Dorsolateral prefrontal cortex (tissue), 120 donors: ENCODE measurements at regions of chr9 and their contacts with region 1.

Region 1: DNA sequence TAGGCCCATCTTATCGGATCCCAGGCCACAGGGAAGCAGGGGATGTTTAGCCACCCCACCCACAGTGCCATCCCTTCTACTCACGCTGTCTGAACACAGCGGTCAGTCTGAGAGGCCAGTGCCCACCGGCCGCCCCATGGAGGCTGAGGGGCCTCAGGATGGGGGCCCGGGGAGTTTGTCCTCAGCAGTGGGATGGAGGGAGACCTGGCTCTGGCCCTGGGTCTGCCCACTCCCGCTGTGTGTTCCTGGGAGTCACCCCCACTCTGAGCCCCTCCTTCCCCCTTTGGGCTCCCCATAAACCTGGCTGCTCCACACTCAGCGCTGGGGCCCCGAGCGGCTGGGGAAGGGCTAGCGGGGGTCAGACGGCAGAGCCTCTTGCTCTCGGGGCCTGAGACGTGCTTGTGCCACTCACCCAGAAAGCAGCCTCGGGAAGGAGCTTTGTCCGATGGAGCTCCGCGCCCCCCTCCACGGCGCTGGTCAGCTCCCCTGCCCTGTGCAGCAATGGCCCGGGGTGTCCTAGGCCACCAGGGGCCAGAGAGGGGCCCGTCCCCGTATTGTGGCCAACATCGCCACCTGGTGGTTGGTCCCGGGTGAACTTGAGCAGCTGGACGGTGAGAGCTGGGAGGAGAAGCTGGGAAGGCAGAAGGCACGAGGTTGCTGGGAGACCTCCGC is 10.9 kb upstream of the LAMC3 start:
- DNase-seq: peak; percentile 18 to 83 (median 76)
- H3K4me3 ChIP-seq: no peak overlapping the region
- H3K27ac ChIP-seq: no peak overlapping the region
- H3K27me3 ChIP-seq: peaks cover 0 to 24% (median 3%) of the 10 kb centered on the region in 45 donors
- CTCF ChIP-seq: peak; percentile 61 to 92 (median 81)

Region 2: DNA sequence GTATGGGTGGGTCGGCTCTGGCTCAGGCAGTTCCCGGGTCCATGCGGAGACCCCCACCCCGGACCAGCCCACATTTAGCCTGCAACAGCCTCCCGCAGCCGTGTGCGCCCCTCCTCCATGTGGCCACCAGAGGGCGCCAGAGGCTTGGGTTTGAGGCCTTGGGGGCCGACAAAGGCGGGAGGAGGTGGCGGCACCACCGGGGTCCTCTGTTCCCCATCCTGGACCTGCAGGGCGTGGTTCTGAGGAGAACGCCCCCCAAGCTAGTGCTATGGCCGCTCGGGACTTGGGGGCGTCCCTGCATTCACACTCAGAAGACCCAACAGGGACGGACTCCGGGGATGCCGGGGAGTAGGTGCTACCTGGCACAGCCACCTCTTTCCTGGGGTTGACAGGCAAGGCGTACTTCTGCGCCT is 536.8 kb before region 1 on chr9:
- intact Hi-C with region 1: loop called in 1 of 2 experiments (anchors 5 kb)
- DNase-seq: peak in 5 of 10 donors; percentile 50 to 78 (median 68)
- H3K4me3 ChIP-seq: peak overlapping the region in 24 of 59 donors; percentile 3 to 49 (median 32)
- H3K27ac ChIP-seq: no peak overlapping the region
- H3K27me3 ChIP-seq: peaks cover 0 to 14% (median 0%) of the 10 kb centered on the region in 45 donors
- CTCF ChIP-seq: peak; percentile 77 to 99 (median 96)

Region 3: DNA sequence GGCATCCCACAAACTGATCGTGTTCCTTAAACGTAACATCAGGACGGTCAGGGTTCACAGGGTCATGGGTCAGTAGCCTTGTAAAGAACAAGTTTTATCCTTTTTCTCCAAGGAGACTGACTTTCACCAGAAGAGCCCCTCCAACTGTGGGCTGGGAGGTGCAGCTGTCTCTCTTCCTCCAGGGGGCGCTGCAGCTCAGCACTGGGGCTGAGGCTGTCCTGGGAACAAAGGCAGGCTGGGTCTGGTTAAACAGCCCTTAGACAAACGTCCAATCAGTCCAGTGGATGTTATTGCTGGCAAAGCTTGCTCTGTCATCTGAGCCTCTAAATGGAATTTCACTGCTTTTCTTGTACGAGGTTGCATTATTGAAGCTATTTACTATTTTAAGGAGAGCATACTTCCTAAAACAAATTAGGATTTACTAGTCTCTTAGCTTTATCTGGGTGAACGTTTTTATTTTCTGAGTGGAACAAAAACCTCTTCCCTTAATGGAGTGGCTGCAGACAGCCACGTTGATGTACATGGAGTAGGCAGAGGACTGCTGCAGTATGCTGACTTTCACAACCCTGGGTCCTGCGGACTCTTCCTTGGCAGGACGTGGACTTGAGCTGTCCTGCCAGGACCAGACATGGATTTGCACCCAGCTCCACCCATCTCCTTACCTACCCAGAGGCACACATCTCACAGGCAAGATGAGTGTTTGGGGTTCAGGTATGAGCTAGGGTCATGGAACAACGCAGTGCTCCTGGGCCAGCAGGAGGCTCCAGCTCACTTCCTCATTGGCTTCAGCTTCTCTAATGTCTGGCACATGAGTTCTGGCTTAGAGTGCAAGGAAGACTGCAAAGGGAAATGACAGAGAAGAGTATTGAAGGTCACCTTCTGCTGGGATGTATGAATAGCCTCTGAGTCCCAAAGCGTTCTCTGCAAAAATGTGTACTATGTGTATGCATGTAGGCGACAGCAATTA is 296.7 kb before region 1 on chr9:
- intact Hi-C with region 1: loop called in 1 of 2 experiments (anchors 5 kb)
- DNase-seq: peak; percentile 51 to 80 (median 73)
- H3K4me3 ChIP-seq: peak overlapping the region in 2 of 59 donors; percentile 2 to 7
- H3K27ac ChIP-seq: peak overlapping the region in 51 of 59 donors; percentile 5 to 80 (median 63)
- H3K27me3 ChIP-seq: no peaks in the 10 kb centered on the region
- CTCF ChIP-seq: peak; percentile 78 to 98 (median 94)

Region 4: DNA sequence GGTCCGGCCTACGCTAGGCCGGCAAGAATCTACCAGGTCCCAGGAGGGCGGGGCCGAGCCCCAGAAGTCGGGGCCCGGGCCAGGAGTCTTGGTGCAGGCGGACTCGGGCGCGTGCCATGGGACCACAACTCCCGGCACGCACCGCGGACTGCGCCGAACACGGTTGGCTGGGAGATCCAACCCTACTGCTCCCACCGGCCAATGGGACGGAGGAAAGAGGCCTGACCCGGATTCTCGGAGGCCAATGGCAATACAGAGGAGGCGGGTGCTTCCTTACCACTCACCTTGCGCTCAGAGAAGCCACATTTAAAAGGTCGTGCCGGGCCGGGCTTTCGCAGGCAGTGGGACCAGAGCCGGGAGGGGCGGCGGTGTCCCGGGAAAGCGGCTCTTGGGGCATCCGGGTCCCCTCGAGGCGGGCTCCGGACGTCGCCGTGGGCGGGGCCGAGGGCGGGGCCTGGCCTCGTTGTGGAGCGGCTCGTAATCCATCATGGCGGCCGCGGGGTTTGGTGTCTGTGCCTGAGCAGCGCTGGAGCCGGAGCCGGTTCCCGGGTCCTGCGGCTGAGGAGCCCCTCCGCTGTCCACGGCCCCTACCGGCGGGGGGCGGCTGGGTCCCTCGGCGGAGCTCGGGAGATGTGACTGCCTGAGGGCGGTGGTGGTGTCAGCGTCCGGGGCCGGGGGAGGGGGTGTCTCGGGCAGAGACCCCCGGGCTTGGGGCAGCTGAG is 285.3 kb before region 1 on chr9:
- intact Hi-C with region 1: loop called in 1 of 2 experiments (anchors 2 kb)
- DNase-seq: peak; percentile 98 to 99 (median 98)
- H3K4me3 ChIP-seq: peak overlapping the region; percentile 74 to 99 (median 93)
- H3K27ac ChIP-seq: peak overlapping the region; percentile 91 to 100 (median 99)
- H3K27me3 ChIP-seq: no peaks in the 10 kb centered on the region
- CTCF ChIP-seq: peak in 11 of 56 donors; percentile 4 to 48 (median 24)

Region 5: DNA sequence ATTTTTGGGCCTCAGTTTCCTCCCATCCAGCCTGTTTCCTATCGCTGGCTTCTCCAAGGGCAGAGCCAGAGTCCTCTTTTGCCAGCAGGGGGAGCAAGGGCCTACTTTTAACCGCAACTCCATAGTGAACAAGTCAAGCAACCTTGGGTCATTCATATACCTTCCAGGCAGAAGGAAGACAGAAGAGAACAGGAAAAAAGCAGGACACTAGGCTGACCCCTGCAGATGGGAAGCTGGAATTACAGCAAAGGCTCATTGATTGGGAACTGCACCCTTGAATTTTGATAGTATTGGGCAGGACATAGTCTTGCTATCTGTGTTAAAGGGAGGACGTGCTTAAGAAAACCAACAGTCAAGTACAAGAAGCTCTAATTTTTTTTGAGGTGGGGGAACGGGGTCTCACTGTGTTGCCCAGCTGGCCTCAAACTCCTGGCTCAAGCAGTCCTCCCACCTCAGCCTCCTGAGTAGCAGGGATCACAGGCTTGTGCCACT is 131.5 kb before region 1 on chr9:
- intact Hi-C with region 1: loop called (anchors 2 to 5 kb)
- DNase-seq: peak in 9 of 10 donors; percentile 50 to 82 (median 65)
- H3K4me3 ChIP-seq: no peak overlapping the region
- H3K27ac ChIP-seq: peak overlapping the region in 15 of 59 donors; percentile 11 to 66 (median 28)
- H3K27me3 ChIP-seq: no peaks in the 10 kb centered on the region
- CTCF ChIP-seq: peak; percentile 60 to 89 (median 78)

Region 6: DNA sequence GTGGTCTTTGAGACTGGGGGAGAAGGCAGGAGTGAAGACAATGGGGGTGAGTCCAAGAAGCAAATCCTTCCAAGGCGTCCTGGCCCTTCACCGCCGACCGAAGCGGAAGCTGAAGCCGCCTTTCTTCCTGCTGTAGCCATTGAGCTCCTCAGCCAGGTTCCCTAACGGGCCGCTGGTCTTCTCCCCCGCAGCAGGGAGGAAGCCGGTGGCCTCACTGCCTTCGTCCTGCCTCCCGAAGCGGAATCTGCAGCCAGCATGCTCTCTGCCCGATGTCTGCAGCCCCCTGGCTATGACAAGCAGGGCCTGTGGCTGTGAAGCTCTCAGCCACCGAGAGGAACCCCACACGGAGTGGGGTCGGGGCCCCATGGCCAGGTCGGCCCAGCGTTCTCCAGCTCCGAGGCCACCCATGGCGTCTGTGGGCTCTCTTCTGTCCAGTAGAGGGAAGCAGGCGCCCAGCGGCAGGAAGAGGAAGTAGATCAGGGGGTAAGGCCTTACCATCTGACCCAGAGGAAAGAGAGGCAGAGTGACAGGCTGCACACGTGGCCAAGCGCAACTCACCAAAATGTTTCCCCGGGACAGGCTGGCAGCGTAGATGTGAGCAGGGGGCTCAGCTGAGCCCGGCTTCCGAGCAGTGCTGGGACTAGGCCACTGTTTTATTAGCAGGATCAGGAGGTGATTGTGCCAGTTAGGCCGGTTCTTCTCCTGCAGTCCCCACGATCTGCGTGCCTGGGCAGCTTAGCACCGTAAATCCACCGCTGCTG is 104.5 kb before region 1 on chr9:
- intact Hi-C with region 1: loop called in 1 of 2 experiments (anchors 5 kb)
- DNase-seq: no peak
- H3K4me3 ChIP-seq: peak overlapping the region in 2 of 59 donors; percentile 16 to 29
- H3K27ac ChIP-seq: peak overlapping the region in 12 of 59 donors; percentile 8 to 59 (median 44)
- H3K27me3 ChIP-seq: no peaks in the 10 kb centered on the region
- CTCF ChIP-seq: peak in 33 of 56 donors; percentile 14 to 50 (median 32)